ENCODE measurements at regions of chr9 and their contacts with region 1.

Region 1: GRCh38 chr9:96758845-96759673 is 18.8 kb downstream of the ZNF510 start:
- DNase-seq: no peak
- H3K4me3 ChIP-seq: no peak overlapping the region
- H3K27ac ChIP-seq: no peak overlapping the region
- H3K4me1 ChIP-seq: no peaks in the 10 kb centered on the region
- H3K27me3 ChIP-seq: no peaks in the 10 kb centered on the region
- CTCF ChIP-seq: no peak

Region 2: GRCh38 chr9:96626912-96627311 is 132.1 kb before region 1 on chr9:
- CTCF ChIA-PET with region 1: no interaction called
- dilution Hi-C with region 1: no loop called
- in situ Hi-C with region 1: no loop called
- intact Hi-C with region 1: no loop called
- DNase-seq: no peak
- H3K4me3 ChIP-seq: no peak overlapping the region
- H3K27ac ChIP-seq: no peak overlapping the region
- H3K4me1 ChIP-seq: peaks cover 8% of the 10 kb centered on the region
- H3K27me3 ChIP-seq: no peaks in the 10 kb centered on the region
- CTCF ChIP-seq: no peak

Region 3: GRCh38 chr9:96686548-96687335 is 72.3 kb before region 1 on chr9:
- CTCF ChIA-PET with region 1: no interaction called
- dilution Hi-C with region 1: no loop called
- in situ Hi-C with region 1: no loop called
- intact Hi-C with region 1: no loop called
- DNase-seq: peak; percentile 67
- H3K4me3 ChIP-seq: peak overlapping the region; percentile 13 to 41 (median 36)
- H3K27ac ChIP-seq: no peak overlapping the region
- H3K4me1 ChIP-seq: peaks cover 4% of the 10 kb centered on the region
- H3K27me3 ChIP-seq: no peaks in the 10 kb centered on the region
- CTCF ChIP-seq: peak; percentile 27 to 45

Region 4: DNA sequence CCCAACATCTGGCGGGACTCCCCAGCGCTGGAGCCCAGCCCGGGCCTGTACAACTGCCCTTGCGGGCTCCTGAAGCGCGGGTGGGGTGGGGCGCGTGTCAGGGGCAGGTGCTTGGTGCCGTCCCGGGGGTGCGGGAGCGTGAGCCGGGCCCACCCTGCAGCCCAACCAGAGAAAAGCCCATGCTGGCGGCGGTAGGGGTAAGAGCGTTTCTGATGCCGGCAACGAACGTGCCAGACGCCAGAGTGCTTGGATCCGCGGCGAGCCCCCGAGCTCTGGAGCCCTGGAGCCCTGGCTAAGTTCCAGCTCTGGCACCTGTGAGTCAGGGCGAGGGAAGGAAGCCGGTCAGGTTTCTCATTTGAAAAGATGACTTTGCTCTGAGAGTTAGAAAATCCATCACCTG is 39.1 kb before region 1 on chr9:
- CTCF ChIA-PET with region 1: no interaction called
- dilution Hi-C with region 1: loop called (anchors 5 kb)
- in situ Hi-C with region 1: no loop called
- intact Hi-C with region 1: no loop called
- DNase-seq: peak; percentile 35
- H3K4me3 ChIP-seq: no peak overlapping the region
- H3K27ac ChIP-seq: no peak overlapping the region
- H3K4me1 ChIP-seq: peaks cover 4% of the 10 kb centered on the region
- H3K27me3 ChIP-seq: no peaks in the 10 kb centered on the region
- CTCF ChIP-seq: no peak

Region 5: GRCh38 chr9:96777426-96777864 is 18.4 kb after region 1 on chr9:
- CTCF ChIA-PET with region 1: no interaction called
- dilution Hi-C with region 1: no loop called
- in situ Hi-C with region 1: no loop called
- intact Hi-C with region 1: no loop called
- DNase-seq: no peak
- H3K4me3 ChIP-seq: peak overlapping the region; percentile 67 to 100 (median 69)
- H3K27ac ChIP-seq: peak overlapping the region; percentile 4
- H3K4me1 ChIP-seq: peaks cover 6% of the 10 kb centered on the region
- H3K27me3 ChIP-seq: no peaks in the 10 kb centered on the region
- CTCF ChIP-seq: no peak

Measured in mammary epithelial cell (primary cell).